ENCODE measurements at regions of chr4 and their contacts with region 1.

Region 1: GRCh38 chr4:88938135-88938534 is 118.8 kb downstream of the FAM13A start:
- DNase-seq: no peak
- ATAC-seq: no peak
- H3K4me3 Mint-ChIP-seq: no peak overlapping the region
- H3K27ac Mint-ChIP-seq: no peak overlapping the region
- H3K4me1 Mint-ChIP-seq: peaks cover 37% of the 10 kb centered on the region
- H3K27me3 Mint-ChIP-seq: no peaks in the 10 kb centered on the region

Region 2: DNA sequence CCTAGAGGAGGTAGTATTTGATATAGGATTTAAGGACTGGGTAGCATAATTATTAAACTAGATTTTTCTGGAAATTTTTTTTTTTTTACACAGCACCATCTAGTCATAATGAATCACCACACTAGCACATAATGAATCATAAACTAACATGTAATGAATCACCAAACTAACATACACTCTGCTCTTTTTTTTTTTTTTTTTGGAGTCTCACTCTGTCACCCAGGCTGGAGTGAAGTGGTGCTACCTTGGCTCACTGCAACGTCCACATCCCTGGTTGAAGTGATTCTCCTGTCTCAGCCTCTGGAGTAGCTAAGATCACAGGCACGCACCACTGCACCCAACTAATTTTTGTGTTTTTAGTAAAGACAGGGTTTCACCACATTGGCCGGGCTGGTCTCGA is 26.3 kb after region 1 on chr4:
- CTCF ChIA-PET with region 1: no interaction called
- POLR2A ChIA-PET with region 1: no interaction called
- intact Hi-C with region 1: loop called in 1 of 2 experiments (anchors 1 kb)
- DNase-seq: peak; percentile 26
- ATAC-seq: peak; percentile 92
- H3K4me3 Mint-ChIP-seq: no peak overlapping the region
- H3K27ac Mint-ChIP-seq: no peak overlapping the region
- H3K4me1 Mint-ChIP-seq: peaks cover 11% of the 10 kb centered on the region
- H3K27me3 Mint-ChIP-seq: peaks cover 2% of the 10 kb centered on the region

Region 3: DNA sequence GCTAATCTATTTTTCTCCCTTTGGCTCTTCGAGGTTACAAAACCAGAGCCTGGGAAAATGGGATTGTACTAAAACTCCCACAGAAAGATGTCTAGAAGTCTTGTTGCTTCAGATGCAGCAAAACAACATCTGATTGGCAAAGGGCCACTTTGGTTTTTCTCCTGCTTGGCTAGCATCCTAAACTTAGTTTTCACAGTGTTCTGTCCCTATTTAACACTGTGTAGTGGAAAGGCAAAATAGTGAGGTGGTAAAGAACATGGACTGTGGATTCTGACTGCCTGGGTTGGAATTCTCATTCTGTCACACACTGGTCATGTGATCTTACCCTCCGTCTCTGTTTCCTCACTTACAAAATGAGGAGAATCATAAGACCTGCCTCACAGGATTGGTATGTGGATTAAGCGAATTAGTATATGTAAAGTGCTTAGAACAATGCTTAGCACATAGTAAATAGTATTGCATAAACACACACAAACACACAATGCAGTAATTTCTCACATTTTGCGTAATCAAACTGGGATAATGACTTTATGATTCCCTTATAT is 196.7 kb after region 1 on chr4:
- CTCF ChIA-PET with region 1: no interaction called
- POLR2A ChIA-PET with region 1: no interaction called
- intact Hi-C with region 1: no loop called
- DNase-seq: no peak
- ATAC-seq: no peak
- H3K4me3 Mint-ChIP-seq: no peak overlapping the region
- H3K27ac Mint-ChIP-seq: no peak overlapping the region
- H3K4me1 Mint-ChIP-seq: peaks cover 2% of the 10 kb centered on the region
- H3K27me3 Mint-ChIP-seq: no peaks in the 10 kb centered on the region

Measured in activated CD4-positive, alpha-beta T cell treated with anti-CD3 and anti-CD28 coated beads for 36 hours (primary cell).